Vagina (tissue), 2 donors: ENCODE measurements at regions of chr19 and their contacts with region 1.

Region 1: GRCh38 chr19:39397360-39398296 is 6.5 kb downstream of the MED29 start:
- DNase-seq: peak in 1 of 2 donors; percentile 92
- H3K4me3 ChIP-seq: peak overlapping the region in 1 of 2 donors; percentile 12
- H3K27ac ChIP-seq: peak overlapping the region; percentile 97
- H3K4me1 ChIP-seq: peaks cover 54% of the 10 kb centered on the region
- H3K27me3 ChIP-seq: no peaks in the 10 kb centered on the region
- CTCF ChIP-seq: peak; percentile 97 to 98 (median 97)
- POLR2A ChIP-seq: no peak

Region 2: GRCh38 chr19:39187559-39187957 is 210.1 kb before region 1 on chr19:
- intact Hi-C with region 1: no loop called
- DNase-seq: no peak
- H3K4me3 ChIP-seq: no peak overlapping the region
- H3K27ac ChIP-seq: no peak overlapping the region
- H3K4me1 ChIP-seq: no peaks in the 10 kb centered on the region
- H3K27me3 ChIP-seq: no peaks in the 10 kb centered on the region
- CTCF ChIP-seq: peak in 1 of 3 experiments; percentile 6
- POLR2A ChIP-seq: no peak

Region 3: DNA sequence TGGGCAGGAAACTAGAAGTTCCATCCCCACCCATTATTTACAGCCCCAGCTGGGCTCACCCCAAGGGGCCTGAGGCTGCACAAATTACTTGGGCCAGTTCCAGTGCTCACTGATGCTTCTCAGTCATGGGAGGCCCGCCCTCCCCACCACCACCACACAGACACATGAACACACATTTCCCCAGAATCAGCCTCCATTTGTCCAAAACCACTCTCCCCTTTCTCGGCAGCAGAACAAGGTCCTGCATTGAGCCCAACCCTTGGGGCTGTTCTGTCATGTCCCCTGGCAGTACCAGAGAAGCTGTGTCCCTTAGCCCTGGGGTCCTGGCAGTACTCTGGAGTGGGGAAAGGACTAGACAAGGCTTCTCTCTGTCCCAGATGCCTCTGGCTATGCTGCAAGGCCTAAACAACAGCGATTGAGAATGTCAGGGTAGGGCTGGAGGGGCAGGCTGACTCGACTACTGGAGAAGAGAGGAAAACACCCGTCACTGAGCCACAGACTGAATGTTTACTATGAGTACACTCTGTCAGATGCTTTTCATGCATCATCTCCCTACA is 33.6 kb before region 1 on chr19:
- intact Hi-C with region 1: no loop called
- DNase-seq: no peak
- H3K4me3 ChIP-seq: no peak overlapping the region
- H3K27ac ChIP-seq: peak overlapping the region; percentile 81
- H3K4me1 ChIP-seq: peaks cover 58% of the 10 kb centered on the region
- H3K27me3 ChIP-seq: no peaks in the 10 kb centered on the region
- CTCF ChIP-seq: no peak
- POLR2A ChIP-seq: no peak

Region 4: GRCh38 chr19:39444571-39445264 is 47.1 kb after region 1 on chr19:
- intact Hi-C with region 1: loop called (anchors 5 kb)
- DNase-seq: no peak
- H3K4me3 ChIP-seq: peak overlapping the region; percentile 64 to 97
- H3K27ac ChIP-seq: peak overlapping the region; percentile 95
- H3K4me1 ChIP-seq: peaks cover 49% of the 10 kb centered on the region
- H3K27me3 ChIP-seq: no peaks in the 10 kb centered on the region
- CTCF ChIP-seq: no peak
- POLR2A ChIP-seq: no peak